A673 (cell line): ENCODE measurements at regions of chr5 and their contacts with region 1.

Region 1: GRCh38 chr5:133189911-133190310 is 138.1 kb downstream of the HSPA4 start:
- DNase-seq: no peak
- H3K4me3 ChIP-seq: no peak overlapping the region
- H3K27ac ChIP-seq: no peak overlapping the region
- H3K4me1 ChIP-seq: no peaks in the 10 kb centered on the region
- H3K27me3 ChIP-seq: no peaks in the 10 kb centered on the region
- CTCF ChIP-seq: no peak

Region 2: GRCh38 chr5:132653716-132654115 is 536.2 kb before region 1 on chr5:
- CTCF ChIA-PET with region 1: no interaction called
- POLR2A ChIA-PET with region 1: interaction called, 13 read pairs
- intact Hi-C with region 1: no loop called
- DNase-seq: no peak
- H3K4me3 ChIP-seq: no peak overlapping the region
- H3K27ac ChIP-seq: no peak overlapping the region
- H3K4me1 ChIP-seq: peaks cover 4% of the 10 kb centered on the region
- H3K27me3 ChIP-seq: no peaks in the 10 kb centered on the region
- CTCF ChIP-seq: no peak

Region 3: DNA sequence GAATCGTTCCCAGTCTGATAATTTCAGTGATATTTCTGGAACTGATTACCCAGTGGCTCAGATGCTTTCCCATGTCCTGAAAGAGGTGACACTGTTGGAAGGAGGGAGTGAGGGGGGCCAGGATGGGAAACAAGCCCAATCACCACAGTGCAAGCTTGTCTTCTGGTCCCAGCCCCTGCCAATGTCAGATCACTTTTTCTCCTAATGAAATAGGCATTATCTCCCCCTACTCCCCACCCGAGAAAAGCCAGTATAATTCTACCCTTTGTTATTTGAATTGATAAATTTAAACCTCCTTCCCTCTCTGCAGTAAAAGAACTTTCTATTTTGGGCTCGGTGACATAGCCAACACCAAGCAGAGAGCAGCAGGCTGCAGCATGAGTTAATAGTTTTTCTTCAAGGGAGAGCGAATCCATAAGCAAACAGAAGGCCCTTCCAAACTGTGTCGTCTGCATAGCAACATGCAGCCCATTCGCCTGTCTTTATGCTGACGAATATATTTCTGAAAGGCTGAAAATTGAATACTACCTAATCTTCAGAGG is 1050.6 kb after region 1 on chr5:
- CTCF ChIA-PET with region 1: no interaction called
- POLR2A ChIA-PET with region 1: no interaction called
- intact Hi-C with region 1: no loop called
- DNase-seq: no peak
- H3K4me3 ChIP-seq: no peak overlapping the region
- H3K27ac ChIP-seq: no peak overlapping the region
- H3K4me1 ChIP-seq: no peaks in the 10 kb centered on the region
- H3K27me3 ChIP-seq: no peaks in the 10 kb centered on the region
- CTCF ChIP-seq: no peak